Activated CD8-positive, alpha-beta T cell treated with anti-CD3 and anti-CD28 coated beads, Interleukin-2, amount 10 ng/mL, durations not matched to agents 7 days and 5 days (primary cell): ENCODE measurements at regions of chr17 and their contacts with region 1.

Region 1: DNA sequence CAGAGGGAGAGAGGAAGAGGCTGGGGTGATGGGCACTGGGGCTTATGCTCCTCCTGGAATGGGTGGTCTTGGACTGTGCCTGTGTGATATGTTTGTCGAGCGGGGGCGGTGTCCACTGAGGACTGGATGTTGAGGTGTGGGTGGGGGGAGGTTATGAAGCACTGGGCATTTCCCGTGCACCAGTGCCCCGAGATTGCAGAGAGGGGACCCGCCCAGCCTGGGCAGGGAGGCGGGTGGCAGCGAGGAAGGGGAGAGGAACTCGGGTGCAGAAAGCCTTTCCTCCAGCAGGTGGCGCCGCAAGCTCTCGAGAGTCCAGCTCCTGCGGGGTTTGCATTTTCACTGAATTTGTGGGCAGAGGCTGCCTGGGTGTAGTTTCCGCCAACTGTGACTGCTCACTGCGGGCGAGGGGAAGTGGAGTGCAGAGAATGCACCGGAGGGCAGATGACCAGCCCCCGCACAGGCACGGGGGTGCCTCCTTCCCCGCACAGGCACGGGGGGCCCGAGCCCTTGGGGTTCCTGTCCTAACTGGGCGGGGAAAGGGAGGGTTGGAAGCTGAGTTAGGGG is 190.6 kb downstream of the SEC14L1 start:
- DNase-seq: peak; percentile 97
- ATAC-seq: peak; percentile 90
- H3K4me3 Mint-ChIP-seq: peak overlapping the region; percentile 76
- H3K27ac Mint-ChIP-seq: peak overlapping the region; percentile 88
- H3K4me1 Mint-ChIP-seq: peaks cover 58% of the 10 kb centered on the region
- H3K27me3 Mint-ChIP-seq: peaks cover 2% of the 10 kb centered on the region

Region 2: DNA sequence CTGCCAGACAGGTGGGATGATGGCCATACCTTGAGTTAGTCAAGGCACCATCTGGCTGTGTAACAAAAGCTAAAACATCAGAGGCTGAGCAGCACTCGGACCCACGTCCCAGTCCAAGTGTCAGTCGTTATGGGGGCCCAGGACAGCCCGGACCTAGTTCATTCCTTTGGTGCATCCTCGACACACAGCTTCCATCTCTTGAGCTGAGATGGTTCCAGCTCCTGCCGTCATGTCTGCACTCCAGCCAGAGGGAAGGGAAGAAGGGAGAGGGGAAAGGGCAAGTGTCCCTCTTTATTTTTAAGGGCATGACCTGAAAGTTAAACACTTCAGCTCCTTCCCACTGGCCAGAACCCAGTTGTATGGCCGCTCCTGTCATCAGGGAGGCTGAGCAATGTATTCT is 27.4 kb after region 1 on chr17:
- CTCF ChIA-PET with region 1: interaction called, 10 read pairs
- POLR2A ChIA-PET with region 1: no interaction called
- DNase-seq: no peak
- ATAC-seq: no peak
- H3K4me3 Mint-ChIP-seq: no peak overlapping the region
- H3K27ac Mint-ChIP-seq: no peak overlapping the region
- H3K4me1 Mint-ChIP-seq: peaks cover 11% of the 10 kb centered on the region
- H3K27me3 Mint-ChIP-seq: no peaks in the 10 kb centered on the region

Region 3: DNA sequence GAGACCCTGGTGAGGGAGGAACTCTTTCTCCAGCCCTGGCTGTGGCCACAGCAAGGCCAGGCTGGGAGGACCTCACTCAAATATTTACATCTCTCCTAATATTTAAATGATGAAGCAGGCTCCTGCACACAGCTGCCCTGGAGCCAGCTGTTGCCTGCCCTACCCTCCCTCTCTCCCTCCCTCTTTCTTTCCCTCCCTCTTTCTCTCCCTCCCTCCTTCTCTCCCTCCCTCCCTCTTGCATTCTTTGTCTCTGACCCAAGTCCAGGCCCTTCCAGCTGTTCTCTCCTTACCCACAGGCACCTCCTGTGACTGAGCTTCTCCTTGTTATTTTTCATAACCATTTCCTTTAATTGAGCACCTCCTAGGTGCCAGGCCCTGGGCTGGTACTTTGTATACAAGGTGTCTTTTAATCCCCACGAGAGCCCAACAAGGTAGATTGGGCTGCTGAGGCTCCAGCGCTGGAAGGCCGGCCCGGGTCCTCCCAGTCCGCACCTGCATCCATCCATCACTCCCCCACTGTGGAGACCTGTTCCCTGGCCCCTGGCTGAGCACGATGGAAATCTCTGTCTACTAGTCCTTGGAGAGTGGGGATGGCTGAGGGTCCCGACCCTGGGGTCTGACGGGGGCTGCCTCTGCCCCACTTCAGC is 51.7 kb after region 1 on chr17:
- CTCF ChIA-PET with region 1: interaction called, 28 read pairs
- POLR2A ChIA-PET with region 1: interaction called, 9 read pairs
- DNase-seq: no peak
- ATAC-seq: peak; percentile 20
- H3K4me3 Mint-ChIP-seq: peak overlapping the region; percentile 76
- H3K27ac Mint-ChIP-seq: peak overlapping the region; percentile 91
- H3K4me1 Mint-ChIP-seq: peaks cover 93% of the 10 kb centered on the region
- H3K27me3 Mint-ChIP-seq: no peaks in the 10 kb centered on the region

Region 4: DNA sequence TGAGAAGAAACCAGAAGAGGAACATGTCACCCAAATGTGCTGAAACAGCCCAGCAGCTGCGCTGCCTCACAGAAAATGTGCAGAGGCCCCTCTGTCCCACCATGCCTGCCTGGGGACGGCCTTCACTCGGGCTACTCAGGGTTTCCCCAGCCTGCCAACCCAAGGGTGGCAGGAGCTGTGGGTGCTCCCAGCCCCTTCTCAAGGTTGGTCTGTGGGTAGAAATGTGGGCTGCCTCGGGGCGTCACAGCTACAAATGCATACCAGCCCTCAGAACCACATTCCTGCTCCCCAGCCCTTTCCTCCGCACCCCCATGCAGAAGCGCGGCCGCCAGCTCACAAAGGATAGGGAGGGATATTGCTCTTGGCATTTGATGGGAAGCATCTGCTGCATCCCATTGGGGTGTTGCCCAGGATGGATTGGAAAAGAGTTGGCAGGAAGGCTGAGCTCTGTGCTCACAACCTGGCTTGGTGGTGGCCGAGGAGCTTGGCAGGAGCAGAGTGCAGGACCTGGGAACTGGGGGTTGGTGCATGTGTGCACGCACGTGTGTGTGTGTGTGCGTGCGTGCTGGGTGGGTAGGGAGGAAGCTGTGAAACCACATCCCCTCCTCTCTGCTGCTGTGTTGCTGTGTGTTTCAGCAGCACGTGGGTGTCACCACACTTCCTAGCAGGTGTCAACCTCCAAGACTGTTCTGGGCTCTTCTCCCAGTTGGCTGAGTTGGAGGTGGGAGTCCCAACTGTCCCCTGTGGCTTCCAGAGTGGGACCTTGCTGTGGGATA is 113.8 kb after region 1 on chr17:
- CTCF ChIA-PET with region 1: interaction called, 20 read pairs
- POLR2A ChIA-PET with region 1: interaction called, 12 read pairs
- DNase-seq: peak; percentile 94
- ATAC-seq: peak; percentile 66
- H3K4me3 Mint-ChIP-seq: peak overlapping the region; percentile 82
- H3K27ac Mint-ChIP-seq: peak overlapping the region; percentile 90
- H3K4me1 Mint-ChIP-seq: peaks cover 96% of the 10 kb centered on the region
- H3K27me3 Mint-ChIP-seq: no peaks in the 10 kb centered on the region